A673 (cell line): ENCODE measurements at regions of chr5 and their contacts with region 1.

Region 1: GRCh38 chr5:59724482-59725391 is 168.8 kb downstream of the PDE4D start:
- DNase-seq: peak; percentile 69
- H3K4me3 ChIP-seq: no peak overlapping the region
- H3K27ac ChIP-seq: no peak overlapping the region
- H3K4me1 ChIP-seq: no peaks in the 10 kb centered on the region
- H3K27me3 ChIP-seq: peaks cover 8% of the 10 kb centered on the region
- CTCF ChIP-seq: peak; percentile 78

Region 2: DNA sequence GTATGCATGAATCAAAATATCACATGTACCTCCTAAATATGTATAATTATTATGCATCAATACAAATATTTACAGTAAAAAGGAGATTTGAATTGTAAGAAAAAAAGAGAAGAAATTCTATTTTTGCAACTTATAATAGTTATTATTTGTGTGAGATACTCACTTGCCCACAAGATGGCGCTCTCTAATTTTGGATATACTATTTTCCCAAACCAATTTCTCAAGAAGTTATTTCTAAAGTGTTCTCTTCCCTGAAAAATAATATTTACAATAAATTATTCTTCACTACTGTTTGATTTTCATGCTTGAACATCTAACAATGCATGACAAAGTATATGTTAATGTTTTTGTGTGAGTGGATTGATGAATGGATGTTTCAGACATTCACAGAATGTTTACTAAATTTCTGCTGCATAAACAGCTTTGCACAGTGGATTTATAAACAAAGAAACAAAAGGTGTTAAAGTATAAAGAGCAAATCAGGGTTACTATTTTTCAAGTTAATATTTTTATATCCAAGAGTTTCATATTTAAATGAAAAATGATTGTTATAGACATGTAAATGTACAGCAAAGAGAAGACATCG is 334.6 kb before region 1 on chr5:
- CTCF ChIA-PET with region 1: no interaction called
- POLR2A ChIA-PET with region 1: no interaction called
- intact Hi-C with region 1: loop called (anchors 1 kb)
- DNase-seq: peak; percentile 35
- H3K4me3 ChIP-seq: no peak overlapping the region
- H3K27ac ChIP-seq: no peak overlapping the region
- H3K4me1 ChIP-seq: no peaks in the 10 kb centered on the region
- H3K27me3 ChIP-seq: peaks cover 5% of the 10 kb centered on the region
- CTCF ChIP-seq: peak; percentile 71

Region 3: DNA sequence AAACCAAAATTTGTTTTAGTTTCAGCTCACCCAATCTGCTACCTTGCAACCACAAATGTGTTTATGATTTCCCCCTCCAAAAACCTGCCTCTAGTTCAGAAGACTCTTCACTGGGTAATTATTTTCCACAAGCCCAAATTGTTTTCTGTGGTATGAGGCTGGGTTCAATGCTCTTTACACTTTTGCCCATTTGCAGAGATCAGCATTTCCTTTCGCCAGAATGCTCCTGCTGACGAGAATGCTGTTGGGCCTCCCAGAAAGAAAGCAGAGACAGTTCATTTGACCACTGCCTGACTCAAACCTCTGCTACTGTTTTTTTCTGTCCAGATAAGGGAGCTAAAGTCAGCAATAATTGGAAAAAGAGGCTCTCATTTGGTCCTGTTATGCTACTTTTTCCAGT is 258.5 kb before region 1 on chr5:
- CTCF ChIA-PET with region 1: no interaction called
- POLR2A ChIA-PET with region 1: no interaction called
- intact Hi-C with region 1: no loop called
- DNase-seq: no peak
- H3K4me3 ChIP-seq: no peak overlapping the region
- H3K27ac ChIP-seq: no peak overlapping the region
- H3K4me1 ChIP-seq: no peaks in the 10 kb centered on the region
- H3K27me3 ChIP-seq: no peaks in the 10 kb centered on the region
- CTCF ChIP-seq: no peak

Region 4: GRCh38 chr5:60161340-60161934 is 436.7 kb after region 1 on chr5:
- CTCF ChIA-PET with region 1: no interaction called
- POLR2A ChIA-PET with region 1: no interaction called
- intact Hi-C with region 1: no loop called
- DNase-seq: peak; percentile 59
- H3K4me3 ChIP-seq: no peak overlapping the region
- H3K27ac ChIP-seq: no peak overlapping the region
- H3K4me1 ChIP-seq: no peaks in the 10 kb centered on the region
- H3K27me3 ChIP-seq: peaks cover 28% of the 10 kb centered on the region
- CTCF ChIP-seq: peak; percentile 69